ENCODE measurements at regions of chr6 and their contacts with region 1.

Region 1: GRCh38 chr6:90860822-90861601 is 274.1 kb upstream of the MAP3K7 start:
- DNase-seq: peak in 2 of 4 experiments; percentile 8 to 11
- ATAC-seq: peak; percentile 67
- H3K4me3 ChIP-seq: no peak overlapping the region
- H3K27ac ChIP-seq: no peak overlapping the region
- H3K4me1 ChIP-seq: no peaks in the 10 kb centered on the region
- H3K27me3 ChIP-seq: 0 out of 5 replicates have a peak, but pooled peaks cover 0 to 4% of the 10 kb centered on the region in 2 experiments
- CTCF ChIP-seq: peak in 2 of 3 experiments; percentile 27 to 42; a peak in 1 of 6 replicates
- EP300 ChIP-seq: no peak
- POLR2A ChIP-seq: no peak
- RAD21 ChIP-seq: peak; percentile 17 to 45; a peak in 3 of 4 replicates

Region 2: DNA sequence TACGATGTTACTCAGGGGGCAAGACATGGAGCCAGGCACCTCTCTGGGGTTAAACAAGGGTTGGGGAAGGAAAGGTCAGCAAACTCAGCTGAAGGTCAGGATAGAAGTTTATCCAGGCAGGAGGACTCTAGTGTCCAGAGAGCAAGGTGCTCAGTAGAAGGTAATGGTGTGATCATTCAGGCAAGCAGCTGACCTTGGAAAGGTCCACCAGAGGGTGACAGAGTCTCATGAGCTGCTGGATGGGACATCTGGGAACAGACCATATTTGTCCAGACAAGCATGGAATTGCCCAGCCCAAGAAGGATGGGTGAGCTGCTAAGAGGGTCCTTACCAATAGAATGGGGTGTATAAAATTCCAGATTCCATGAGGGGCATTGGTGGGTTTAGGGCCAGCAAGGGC is 363.6 kb before region 1 on chr6:
- CTCF ChIA-PET with region 1: no interaction called
- POLR2A ChIA-PET with region 1: no interaction called
- in situ Hi-C with region 1: no loop called
- intact Hi-C with region 1: loop called (anchors 5 kb)
- DNase-seq: peak; percentile 34 to 61 (median 40)
- ATAC-seq: peak; percentile 87
- H3K4me3 ChIP-seq: no peak overlapping the region
- H3K27ac ChIP-seq: no peak overlapping the region
- H3K4me1 ChIP-seq: peaks cover 0 to 6% of the 10 kb centered on the region in 2 experiments; a peak in 3 of 5 replicates
- H3K27me3 ChIP-seq: no peaks in the 10 kb centered on the region
- CTCF ChIP-seq: peak; percentile 70 to 71 (median 70)
- EP300 ChIP-seq: no peak
- POLR2A ChIP-seq: no peak
- RAD21 ChIP-seq: peak; percentile 62 to 90

Region 3: GRCh38 chr6:90605749-90606344 is 255.2 kb before region 1 on chr6:
- CTCF ChIA-PET with region 1: no interaction called
- POLR2A ChIA-PET with region 1: no interaction called
- in situ Hi-C with region 1: no loop called
- intact Hi-C with region 1: loop called (anchors 10 kb)
- DNase-seq: peak in 1 of 4 experiments; percentile 37
- ATAC-seq: peak; percentile 21; the same call in 1 of the 3 replicates
- H3K4me3 ChIP-seq: no peak overlapping the region
- H3K27ac ChIP-seq: peak overlapping the region; percentile 41; the same call in 1 of the 3 replicates
- H3K4me1 ChIP-seq: peaks cover 11 to 12% of the 10 kb centered on the region in 2 experiments; a peak in 3 of 5 replicates
- H3K27me3 ChIP-seq: peaks cover 0 to 8% of the 10 kb centered on the region in 2 experiments; a peak in 2 of 5 replicates
- CTCF ChIP-seq: no peak
- EP300 ChIP-seq: peak; percentile 36; the same call in 1 of the 2 replicates
- POLR2A ChIP-seq: no peak
- RAD21 ChIP-seq: no peak

Region 4: DNA sequence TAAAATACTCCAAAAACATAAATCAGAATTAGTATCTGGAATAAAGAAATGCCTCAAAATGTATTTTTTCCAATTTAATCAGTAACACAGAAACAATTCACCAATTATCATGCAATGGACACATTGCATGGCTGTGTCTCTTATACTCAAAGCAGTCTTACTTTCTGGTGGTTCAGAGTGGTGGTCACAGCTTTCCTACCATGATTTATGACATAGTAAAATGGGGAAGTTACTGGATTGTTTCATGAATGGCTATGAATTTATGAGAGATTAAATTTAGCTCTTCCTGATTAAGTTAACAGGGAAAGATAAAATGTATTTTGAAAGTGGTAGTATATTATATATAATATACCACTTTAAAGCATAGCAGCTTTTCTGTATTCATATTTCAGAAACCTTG is 57.3 kb after region 1 on chr6:
- CTCF ChIA-PET with region 1: no interaction called
- POLR2A ChIA-PET with region 1: no interaction called
- in situ Hi-C with region 1: no loop called
- intact Hi-C with region 1: no loop called
- DNase-seq: no peak
- ATAC-seq: no peak
- H3K4me3 ChIP-seq: no peak overlapping the region
- H3K27ac ChIP-seq: no peak overlapping the region
- H3K4me1 ChIP-seq: no peaks in the 10 kb centered on the region
- H3K27me3 ChIP-seq: no peaks in the 10 kb centered on the region
- CTCF ChIP-seq: no peak
- EP300 ChIP-seq: no peak
- POLR2A ChIP-seq: no peak
- RAD21 ChIP-seq: no peak

Measured in K562 (cell line).